ENCODE measurements at regions of chr1 and their contacts with region 1.

Region 1: GRCh38 chr1:145927063-145927886 is at the start of gene RBM8A:
- DNase-seq: peak; percentile 95 to 96
- ATAC-seq: peak; percentile 97
- H3K4me3 ChIP-seq: peak within 1 kb of the TSS; percentile 67 to 72
- H3K27ac ChIP-seq: peak within 1 kb of the TSS; percentile 69 to 77
- H3K4me1 ChIP-seq: no peaks in the 10 kb centered on the region
- H3K27me3 ChIP-seq: no peaks in the 10 kb centered on the region
- total RNA-seq, gene RBM8A: 81.2 to 84.5 TPM

Region 2: GRCh38 chr1:145858894-145859490 is 68.3 kb before region 1 on chr1 and contains the start of gene PIAS3:
- intact Hi-C with region 1: no loop called
- DNase-seq: peak; percentile 98 to 99
- ATAC-seq: peak; percentile 98
- H3K4me3 ChIP-seq: peak within 1 kb of the TSS; percentile 87 to 96
- H3K27ac ChIP-seq: peak within 1 kb of the TSS in 1 of 2 donors; percentile 85
- H3K4me1 ChIP-seq: peaks cover 0 to 3% of the 10 kb centered on the region in 2 donors
- H3K27me3 ChIP-seq: no peaks in the 10 kb centered on the region
- total RNA-seq, gene PIAS3: 44.5 to 60.6 TPM

Region 3: GRCh38 chr1:145963995-145964901 is 37.0 kb after region 1 on chr1 and contains the starts of genes ANKRD34A and POLR3GL:
- intact Hi-C with region 1: loop called in 1 of 2 experiments (anchors 2 kb)
- DNase-seq: peak; percentile 97
- ATAC-seq: peak; percentile 92
- H3K4me3 ChIP-seq: peak within 1 kb of the TSS; percentile 57 to 91
- H3K27ac ChIP-seq: peak within 1 kb of the TSS; percentile 81 to 95
- H3K4me1 ChIP-seq: no peaks in the 10 kb centered on the region
- H3K27me3 ChIP-seq: no peaks in the 10 kb centered on the region
- total RNA-seq, gene ANKRD34A: 1.4 to 2.2 TPM
- total RNA-seq, gene POLR3GL: 23.8 to 26.4 TPM

Measured in aorta (tissue), 5 donors.